GM12878 (cell line): ENCODE measurements at regions of chr11 and their contacts with region 1.

Region 1: DNA sequence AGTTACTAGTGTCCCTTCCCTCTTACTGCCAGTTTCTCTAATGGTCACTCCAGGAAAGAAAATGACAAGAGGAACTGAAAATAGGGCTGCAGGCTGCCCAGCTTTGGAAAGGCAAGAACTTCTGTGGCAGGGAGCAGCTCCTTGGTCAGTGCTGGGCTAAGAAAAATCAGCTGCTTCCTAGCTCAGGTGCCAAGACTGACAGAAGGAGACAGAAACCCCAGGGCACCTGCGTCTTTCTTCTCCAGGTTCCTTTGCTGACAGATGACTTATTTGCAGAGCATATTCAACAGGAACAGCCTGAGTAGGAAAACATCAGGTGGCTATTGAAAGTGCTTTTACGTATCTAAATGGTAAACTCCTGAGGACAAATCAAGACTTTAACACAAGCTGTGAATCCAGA is 25.4 kb downstream of the MAML2 start:
- DNase-seq: no peak
- ATAC-seq: no peak
- H3K4me3 ChIP-seq: no peak overlapping the region
- H3K27ac ChIP-seq: no peak overlapping the region
- H3K4me1 ChIP-seq: peaks cover 20% of the 10 kb centered on the region
- H3K27me3 ChIP-seq: no peaks in the 10 kb centered on the region
- CTCF ChIP-seq: no peak
- EP300 ChIP-seq: no peak
- POLR2A ChIP-seq: no peak
- RAD21 ChIP-seq: no peak

Region 2: DNA sequence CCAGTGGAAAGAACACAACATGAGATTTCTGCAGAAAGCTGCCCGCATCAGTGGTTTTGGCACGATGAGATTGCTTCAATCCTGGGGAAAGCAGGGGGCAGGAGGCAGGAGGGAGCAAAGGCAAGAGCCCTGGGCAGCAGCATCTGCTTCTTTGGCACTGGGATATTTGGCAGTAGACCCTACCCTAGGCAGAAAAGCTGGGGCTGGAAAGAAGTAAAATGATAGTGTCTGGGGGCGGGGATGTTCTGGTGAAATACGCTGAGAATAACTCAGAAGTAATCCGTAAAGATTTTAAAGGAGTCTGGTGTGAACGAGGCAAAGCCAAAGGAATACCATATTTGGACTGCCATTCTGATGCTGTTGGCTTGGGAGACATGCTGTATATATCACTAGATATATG is 590.0 kb before region 1 on chr11:
- CTCF ChIA-PET with region 1: no interaction called
- POLR2A ChIA-PET with region 1: no interaction called
- RAD21 ChIA-PET with region 1: no interaction called
- SMC1A ChIA-PET with region 1: no interaction called
- in situ Hi-C with region 1: no loop called
- intact Hi-C with region 1: no loop called
- DNase-seq: no peak
- ATAC-seq: no peak
- H3K4me3 ChIP-seq: no peak overlapping the region
- H3K27ac ChIP-seq: no peak overlapping the region
- H3K4me1 ChIP-seq: no peaks in the 10 kb centered on the region
- H3K27me3 ChIP-seq: no peaks in the 10 kb centered on the region
- CTCF ChIP-seq: no peak
- EP300 ChIP-seq: no peak
- POLR2A ChIP-seq: no peak
- RAD21 ChIP-seq: no peak

Region 3: DNA sequence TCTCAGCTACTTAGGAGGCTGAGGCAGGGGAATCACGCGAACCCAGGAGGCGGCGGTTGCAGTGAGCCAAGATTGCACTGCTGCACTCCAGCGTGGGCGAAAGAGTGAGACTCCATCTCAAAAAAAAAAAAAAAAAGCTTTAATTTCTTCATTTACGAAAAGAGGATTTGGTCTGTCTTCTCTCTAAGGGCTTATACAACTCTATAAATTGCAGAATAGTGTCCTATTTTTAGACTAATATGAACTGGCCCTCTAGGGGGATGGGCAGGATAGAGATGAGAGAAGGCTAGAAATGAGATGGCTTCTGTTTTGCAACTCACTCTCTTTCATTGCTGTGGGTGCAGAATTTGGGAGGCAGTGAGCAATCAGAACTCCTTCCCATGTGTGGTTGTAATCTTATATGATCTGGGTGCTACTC is 14.1 kb after region 1 on chr11:
- CTCF ChIA-PET with region 1: interaction called, 4 read pairs
- POLR2A ChIA-PET with region 1: interaction called, 3 read pairs
- RAD21 ChIA-PET with region 1: interaction called, 5 read pairs
- SMC1A ChIA-PET with region 1: interaction called, 97 read pairs
- in situ Hi-C with region 1: no loop called
- intact Hi-C with region 1: no loop called
- DNase-seq: no peak
- ATAC-seq: peak; percentile 50
- H3K4me3 ChIP-seq: no peak overlapping the region
- H3K27ac ChIP-seq: no peak overlapping the region
- H3K4me1 ChIP-seq: peaks cover 12% of the 10 kb centered on the region; the same call in 1 of the 2 replicates
- H3K27me3 ChIP-seq: no peaks in the 10 kb centered on the region
- CTCF ChIP-seq: no peak
- EP300 ChIP-seq: no peak
- POLR2A ChIP-seq: no peak
- RAD21 ChIP-seq: no peak